CD8-positive, alpha-beta memory T cell (primary cell): ENCODE measurements at regions of chr13 and their contacts with region 1.

Region 1: GRCh38 chr13:41587492-41587891 is 130.1 kb downstream of the RGCC start:
- DNase-seq: peak in 3 of 5 donors; percentile 3 to 51 (median 45)
- H3K4me3 ChIP-seq: no peak overlapping the region
- H3K4me3 Mint-ChIP-seq: no peak overlapping the region
- H3K27ac ChIP-seq: no peak overlapping the region
- H3K27ac Mint-ChIP-seq: no peak overlapping the region
- H3K4me1 ChIP-seq: no peaks in the 10 kb centered on the region
- H3K4me1 Mint-ChIP-seq: no peaks in the 10 kb centered on the region
- H3K27me3 ChIP-seq: no peaks in the 10 kb centered on the region
- H3K27me3 Mint-ChIP-seq: no peaks in the 10 kb centered on the region

Region 2: GRCh38 chr13:41456768-41457588 is 130.5 kb before region 1 on chr13 and contains the start of gene RGCC:
- CTCF ChIA-PET with region 1: interaction called, 13 read pairs
- POLR2A ChIA-PET with region 1: interaction called, 6 read pairs
- DNase-seq: peak; percentile 89 to 98 (median 96)
- H3K4me3 ChIP-seq: peak within 1 kb of the TSS; percentile 95
- H3K4me3 Mint-ChIP-seq: peak within 1 kb of the TSS; percentile 85 to 98 (median 91)
- H3K27ac ChIP-seq: peak within 1 kb of the TSS; percentile 86
- H3K27ac Mint-ChIP-seq: peak within 1 kb of the TSS; percentile 89 to 99 (median 94)
- H3K4me1 ChIP-seq: peaks cover 37% of the 10 kb centered on the region
- H3K4me1 Mint-ChIP-seq: peaks cover 39 to 50% (median 48%) of the 10 kb centered on the region in 3 donors
- H3K27me3 ChIP-seq: no peaks in the 10 kb centered on the region
- H3K27me3 Mint-ChIP-seq: peaks cover 0 to 3% of the 10 kb centered on the region in 2 donors
- total RNA-seq, gene RGCC: 107 to 110 TPM